Breast epithelium (tissue), 4 donors: ENCODE measurements at regions of chr2 and their contacts with region 1.

Region 1: DNA sequence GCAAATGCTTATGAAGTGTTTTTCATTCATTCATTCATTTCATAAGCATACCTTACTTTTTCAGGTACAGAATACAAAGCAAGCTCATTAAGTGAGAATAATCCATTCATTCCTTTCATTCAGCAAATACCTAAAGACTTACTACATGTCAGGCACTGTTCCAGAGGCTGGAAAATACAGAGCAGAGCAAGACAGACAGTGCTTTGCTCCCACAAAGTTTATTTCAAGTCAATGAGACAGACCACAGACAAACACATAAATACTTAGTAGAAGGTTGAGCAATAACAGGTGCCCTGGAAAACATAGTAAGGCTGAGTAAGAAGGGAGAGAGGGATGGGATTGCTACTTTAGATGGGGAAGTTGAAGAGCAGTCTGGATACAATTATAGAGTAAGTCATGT is 309.8 kb downstream of the C1D start:
- DNase-seq: no peak
- H3K4me3 ChIP-seq: no peak overlapping the region
- H3K27ac ChIP-seq: no peak overlapping the region
- H3K4me1 ChIP-seq: no peaks in the 10 kb centered on the region
- H3K27me3 ChIP-seq: no peaks in the 10 kb centered on the region
- CTCF ChIP-seq: no peak
- POLR2A ChIP-seq: no peak

Region 2: GRCh38 chr2:67329951-67330350 is 423.0 kb before region 1 on chr2:
- intact Hi-C with region 1: loop called (anchors 10 kb)
- DNase-seq: no peak
- H3K4me3 ChIP-seq: no peak overlapping the region
- H3K27ac ChIP-seq: no peak overlapping the region
- H3K4me1 ChIP-seq: no peaks in the 10 kb centered on the region
- H3K27me3 ChIP-seq: no peaks in the 10 kb centered on the region
- CTCF ChIP-seq: no peak
- POLR2A ChIP-seq: no peak

Region 3: GRCh38 chr2:67772216-67773170 is 19.5 kb after region 1 on chr2:
- intact Hi-C with region 1: no loop called
- DNase-seq: peak in 1 of 2 donors; percentile 24
- H3K4me3 ChIP-seq: no peak overlapping the region
- H3K27ac ChIP-seq: peak overlapping the region in 1 of 2 donors; percentile 42
- H3K4me1 ChIP-seq: no peaks in the 10 kb centered on the region
- H3K27me3 ChIP-seq: no peaks in the 10 kb centered on the region
- CTCF ChIP-seq: no peak
- POLR2A ChIP-seq: no peak